RWPE1 (cell line): ENCODE measurements at regions of chr16 and their contacts with region 1.

Region 1: DNA sequence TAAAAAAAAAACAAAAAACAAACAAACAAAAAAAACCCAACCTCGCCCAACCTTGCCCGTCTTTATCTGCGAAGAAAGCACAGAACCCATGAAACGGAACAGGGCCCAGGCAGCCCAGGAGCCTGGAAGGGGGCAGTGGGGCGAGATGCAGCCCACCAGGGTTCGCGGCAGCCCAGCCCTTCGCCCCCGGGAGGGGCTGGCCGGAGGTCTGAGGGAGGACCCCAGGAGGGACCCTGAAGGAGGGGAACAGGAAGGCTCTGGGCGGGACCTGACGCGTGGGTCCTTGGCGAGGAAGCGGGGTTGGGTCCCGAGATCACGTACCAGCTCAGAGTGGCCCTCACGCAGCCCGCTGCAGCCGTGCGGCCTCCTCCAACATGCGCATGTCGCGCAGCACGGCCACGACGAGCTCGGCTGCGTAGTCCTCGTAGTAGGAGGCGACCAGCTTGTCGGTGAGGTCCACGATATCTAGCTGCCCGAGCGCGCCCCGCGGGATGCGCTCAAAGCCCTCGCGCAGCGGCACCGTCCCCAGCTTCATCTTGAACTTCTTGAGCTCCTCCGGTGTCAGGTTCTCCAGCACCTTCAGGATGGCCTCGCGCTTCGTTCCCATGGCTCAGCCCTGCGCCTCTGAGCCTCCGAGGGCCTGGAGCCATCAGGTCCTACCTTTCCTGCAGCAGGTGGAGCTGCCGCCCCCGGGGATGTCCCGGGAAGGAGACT is at the start of gene PYDC1:
- DNase-seq: no peak
- H3K27ac ChIP-seq: no peak within 1 kb of the TSS
- CTCF ChIP-seq: no peak

Region 2: GRCh38 chr16:31229501-31229900 is 12.9 kb after region 1 on chr16:
- CTCF ChIA-PET with region 1: no interaction called
- POLR2A ChIA-PET with region 1: interaction called, 11 read pairs
- DNase-seq: no peak
- H3K27ac ChIP-seq: no peak overlapping the region
- CTCF ChIP-seq: no peak